B cell (primary cell): ENCODE measurements at regions of chr6 and their contacts with region 1.

Region 1: GRCh38 chr6:157563611-157564284 is 182.8 kb downstream of the ZDHHC14 start:
- DNase-seq: peak; percentile 68
- ATAC-seq: peak; percentile 31
- H3K4me3 ChIP-seq: no peak overlapping the region
- H3K4me3 Mint-ChIP-seq: peak overlapping the region; percentile 56
- H3K27ac ChIP-seq: peak overlapping the region; percentile 11 to 45
- H3K27ac Mint-ChIP-seq: peak overlapping the region; percentile 90
- H3K4me1 ChIP-seq: peaks cover 80 to 84% of the 10 kb centered on the region in 2 donors
- H3K4me1 Mint-ChIP-seq: peaks cover 72% of the 10 kb centered on the region
- H3K27me3 ChIP-seq: no peaks in the 10 kb centered on the region
- H3K27me3 Mint-ChIP-seq: no peaks in the 10 kb centered on the region
- CTCF ChIP-seq: no peak

Region 2: GRCh38 chr6:157314705-157315321 is 248.9 kb before region 1 on chr6:
- CTCF ChIA-PET with region 1: interaction called, 12 read pairs
- POLR2A ChIA-PET with region 1: no interaction called
- intact Hi-C with region 1: no loop called
- DNase-seq: peak; percentile 77
- ATAC-seq: peak; percentile 92
- H3K4me3 ChIP-seq: no peak overlapping the region
- H3K4me3 Mint-ChIP-seq: no peak overlapping the region
- H3K27ac ChIP-seq: no peak overlapping the region
- H3K27ac Mint-ChIP-seq: no peak overlapping the region
- H3K4me1 ChIP-seq: peaks cover 0 to 3% of the 10 kb centered on the region in 2 donors
- H3K4me1 Mint-ChIP-seq: peaks cover 3% of the 10 kb centered on the region
- H3K27me3 ChIP-seq: no peaks in the 10 kb centered on the region
- H3K27me3 Mint-ChIP-seq: no peaks in the 10 kb centered on the region
- CTCF ChIP-seq: peak; percentile 90

Region 3: DNA sequence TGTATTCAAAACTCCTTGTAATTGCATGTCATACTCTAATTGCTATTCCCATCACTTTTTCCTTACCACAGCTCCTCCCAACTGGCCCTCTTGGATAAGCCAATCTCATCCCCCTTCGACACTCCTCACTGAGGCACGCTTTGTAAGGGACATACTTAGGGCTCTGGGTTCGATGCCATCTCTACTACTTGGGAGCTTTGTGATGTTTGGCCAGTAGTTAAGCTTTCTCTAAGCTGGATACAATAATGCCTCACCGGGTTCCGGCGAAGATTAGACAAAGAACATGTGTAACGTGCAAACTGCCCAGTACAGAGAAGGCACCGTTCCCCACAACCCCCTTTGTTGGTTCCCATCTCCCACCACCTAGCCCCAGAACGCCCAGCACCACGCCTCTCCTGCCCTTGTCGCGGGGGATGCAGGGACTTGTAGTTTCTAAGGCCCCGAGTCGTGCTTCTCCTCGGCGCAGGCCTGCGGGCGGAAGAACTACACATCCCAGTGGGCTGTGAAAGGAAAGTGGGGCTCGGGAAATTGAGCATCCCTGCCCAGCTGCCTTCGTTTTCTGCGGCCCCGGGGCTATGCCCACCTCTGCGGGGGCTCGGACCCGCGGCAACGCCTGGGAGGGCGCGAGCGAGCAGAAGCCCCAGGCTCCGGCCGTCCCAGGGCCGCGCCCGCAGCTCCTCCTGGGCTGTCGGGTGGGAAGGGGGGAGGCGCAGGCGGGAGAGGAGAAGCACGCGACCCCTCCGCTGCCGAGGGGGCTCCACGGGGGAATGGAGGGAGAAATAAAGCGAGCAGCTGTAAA is 183.9 kb before region 1 on chr6:
- CTCF ChIA-PET with region 1: interaction called, 6 read pairs
- POLR2A ChIA-PET with region 1: interaction called, 7 read pairs
- intact Hi-C with region 1: loop called (anchors 5 kb)
- DNase-seq: peak; percentile 90
- ATAC-seq: peak; percentile 74
- H3K4me3 ChIP-seq: peak overlapping the region; percentile 42 to 99 (median 93)
- H3K4me3 Mint-ChIP-seq: peak overlapping the region; percentile 80
- H3K27ac ChIP-seq: peak overlapping the region; percentile 55 to 80
- H3K27ac Mint-ChIP-seq: peak overlapping the region; percentile 69
- H3K4me1 ChIP-seq: peaks cover 24 to 32% of the 10 kb centered on the region in 2 donors
- H3K4me1 Mint-ChIP-seq: peaks cover 26% of the 10 kb centered on the region
- H3K27me3 ChIP-seq: peaks cover 0 to 12% (median 5%) of the 10 kb centered on the region in 4 experiments
- H3K27me3 Mint-ChIP-seq: peaks cover 8% of the 10 kb centered on the region
- CTCF ChIP-seq: no peak

Region 4: GRCh38 chr6:157527471-157527907 is 36.3 kb before region 1 on chr6:
- CTCF ChIA-PET with region 1: no interaction called
- POLR2A ChIA-PET with region 1: no interaction called
- intact Hi-C with region 1: loop called (anchors 5 kb)
- DNase-seq: no peak
- ATAC-seq: peak; percentile 73
- H3K4me3 ChIP-seq: no peak overlapping the region
- H3K4me3 Mint-ChIP-seq: peak overlapping the region; percentile 21
- H3K27ac ChIP-seq: no peak overlapping the region
- H3K27ac Mint-ChIP-seq: peak overlapping the region; percentile 23
- H3K4me1 ChIP-seq: peaks cover 21 to 44% of the 10 kb centered on the region in 2 donors
- H3K4me1 Mint-ChIP-seq: peaks cover 45% of the 10 kb centered on the region
- H3K27me3 ChIP-seq: no peaks in the 10 kb centered on the region
- H3K27me3 Mint-ChIP-seq: no peaks in the 10 kb centered on the region
- CTCF ChIP-seq: no peak

Region 5: GRCh38 chr6:157597446-157598312 is 33.9 kb after region 1 on chr6:
- CTCF ChIA-PET with region 1: interaction called, 6 read pairs
- POLR2A ChIA-PET with region 1: no interaction called
- intact Hi-C with region 1: loop called (anchors 5 kb)
- DNase-seq: peak; percentile 53
- ATAC-seq: peak; percentile 69
- H3K4me3 ChIP-seq: no peak overlapping the region
- H3K4me3 Mint-ChIP-seq: peak overlapping the region; percentile 7
- H3K27ac ChIP-seq: no peak overlapping the region
- H3K27ac Mint-ChIP-seq: peak overlapping the region; percentile 81
- H3K4me1 ChIP-seq: peaks cover 31 to 52% of the 10 kb centered on the region in 2 donors
- H3K4me1 Mint-ChIP-seq: peaks cover 50% of the 10 kb centered on the region
- H3K27me3 ChIP-seq: no peaks in the 10 kb centered on the region
- H3K27me3 Mint-ChIP-seq: no peaks in the 10 kb centered on the region
- CTCF ChIP-seq: peak; percentile 48

Region 6: GRCh38 chr6:157632821-157633220 is 69.1 kb after region 1 on chr6:
- CTCF ChIA-PET with region 1: no interaction called
- POLR2A ChIA-PET with region 1: no interaction called
- intact Hi-C with region 1: no loop called
- DNase-seq: no peak
- ATAC-seq: no peak
- H3K4me3 ChIP-seq: no peak overlapping the region
- H3K4me3 Mint-ChIP-seq: no peak overlapping the region
- H3K27ac ChIP-seq: no peak overlapping the region
- H3K27ac Mint-ChIP-seq: no peak overlapping the region
- H3K4me1 ChIP-seq: peaks cover 11 to 12% of the 10 kb centered on the region in 2 donors
- H3K4me1 Mint-ChIP-seq: peaks cover 15% of the 10 kb centered on the region
- H3K27me3 ChIP-seq: no peaks in the 10 kb centered on the region
- H3K27me3 Mint-ChIP-seq: no peaks in the 10 kb centered on the region
- CTCF ChIP-seq: no peak

Region 7: GRCh38 chr6:157688960-157689599 is 125.3 kb after region 1 on chr6:
- CTCF ChIA-PET with region 1: no interaction called
- POLR2A ChIA-PET with region 1: no interaction called
- intact Hi-C with region 1: no loop called
- DNase-seq: no peak
- ATAC-seq: no peak
- H3K4me3 ChIP-seq: no peak overlapping the region
- H3K4me3 Mint-ChIP-seq: no peak overlapping the region
- H3K27ac ChIP-seq: no peak overlapping the region
- H3K27ac Mint-ChIP-seq: no peak overlapping the region
- H3K4me1 ChIP-seq: no peaks in the 10 kb centered on the region
- H3K4me1 Mint-ChIP-seq: no peaks in the 10 kb centered on the region
- H3K27me3 ChIP-seq: no peaks in the 10 kb centered on the region
- H3K27me3 Mint-ChIP-seq: peaks cover 19% of the 10 kb centered on the region
- CTCF ChIP-seq: no peak

Region 8: DNA sequence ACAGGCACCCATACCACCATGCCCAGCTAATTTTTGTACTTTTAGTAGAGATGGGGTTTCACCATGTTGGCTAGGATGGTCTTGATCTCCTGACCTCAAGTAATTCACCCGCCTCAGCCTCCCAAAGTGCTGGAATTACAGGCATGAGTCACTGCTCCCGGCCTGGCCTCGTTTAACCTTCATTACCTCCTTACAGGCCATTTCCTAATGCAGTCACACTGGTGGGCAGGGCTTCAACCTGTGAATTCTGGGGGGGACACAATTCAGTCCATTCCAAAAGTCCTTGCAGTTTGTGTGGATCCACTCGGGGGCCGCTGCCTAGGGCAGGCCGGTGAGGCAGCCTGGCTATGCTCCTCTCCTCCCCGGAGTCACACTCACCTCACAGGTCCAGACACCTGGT is 146.9 kb after region 1 on chr6:
- CTCF ChIA-PET with region 1: no interaction called
- POLR2A ChIA-PET with region 1: no interaction called
- intact Hi-C with region 1: no loop called
- DNase-seq: no peak
- ATAC-seq: no peak
- H3K4me3 ChIP-seq: no peak overlapping the region
- H3K4me3 Mint-ChIP-seq: no peak overlapping the region
- H3K27ac ChIP-seq: no peak overlapping the region
- H3K27ac Mint-ChIP-seq: no peak overlapping the region
- H3K4me1 ChIP-seq: no peaks in the 10 kb centered on the region
- H3K4me1 Mint-ChIP-seq: no peaks in the 10 kb centered on the region
- H3K27me3 ChIP-seq: peaks cover 0 to 2% (median 0%) of the 10 kb centered on the region in 4 experiments
- H3K27me3 Mint-ChIP-seq: peaks cover 5% of the 10 kb centered on the region
- CTCF ChIP-seq: no peak